PC-9 (cell line): ENCODE measurements at regions of chr14 and their contacts with region 1.

Region 1: DNA sequence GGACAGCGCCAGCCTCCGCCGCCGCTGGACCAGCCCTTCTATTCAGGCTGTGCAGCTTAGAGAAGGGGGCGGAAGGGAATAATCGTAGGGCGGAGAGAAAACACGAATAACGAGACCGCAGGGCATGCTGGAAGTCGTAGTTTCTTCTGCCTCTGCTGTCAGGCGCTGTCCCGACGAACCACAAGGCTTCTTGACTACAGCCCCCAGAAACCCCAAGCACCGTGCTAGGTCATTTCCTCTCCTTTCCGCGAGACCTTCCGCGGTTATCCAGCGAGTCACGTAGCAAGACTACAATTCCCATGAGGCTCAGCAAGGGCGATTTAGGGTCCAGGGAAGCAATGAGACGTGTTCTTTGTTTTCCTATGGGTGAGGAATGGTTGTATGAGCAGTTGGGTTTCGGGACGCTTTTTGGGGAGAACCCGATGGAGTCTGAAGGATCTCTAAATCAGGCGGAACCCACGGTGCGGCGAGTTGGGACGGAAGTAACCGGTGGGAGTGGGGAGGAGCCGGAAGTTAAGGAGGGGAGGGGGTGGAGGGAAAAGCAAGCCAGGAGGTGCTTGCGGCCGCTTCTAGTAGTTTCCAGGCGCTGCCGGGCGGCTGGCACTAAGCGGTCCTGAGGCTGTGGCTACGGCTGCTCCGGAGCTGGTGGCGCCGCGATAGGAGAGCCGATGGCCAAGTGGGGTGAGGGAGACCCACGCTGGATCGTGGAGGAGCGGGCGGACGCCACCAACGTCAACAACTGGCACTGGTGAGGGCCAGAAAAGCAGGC is at the starts of genes AHSA1 and VIPAS39:
- DNase-seq: peak; percentile 99 to 100
- H3K4me3 ChIP-seq: peak within 1 kb of the TSS; percentile 73
- H3K27ac ChIP-seq: peak within 1 kb of the TSS; percentile 80
- H3K4me1 ChIP-seq: peaks cover 20% of the 10 kb centered on the region
- H3K27me3 ChIP-seq: no peaks in the 10 kb centered on the region
- CTCF ChIP-seq: no peak
- total RNA-seq, gene AHSA1: 448 and 674 TPM in 2 replicates
- total RNA-seq, gene VIPAS39: 46.1 and 54.5 TPM in 2 replicates

Region 2: DNA sequence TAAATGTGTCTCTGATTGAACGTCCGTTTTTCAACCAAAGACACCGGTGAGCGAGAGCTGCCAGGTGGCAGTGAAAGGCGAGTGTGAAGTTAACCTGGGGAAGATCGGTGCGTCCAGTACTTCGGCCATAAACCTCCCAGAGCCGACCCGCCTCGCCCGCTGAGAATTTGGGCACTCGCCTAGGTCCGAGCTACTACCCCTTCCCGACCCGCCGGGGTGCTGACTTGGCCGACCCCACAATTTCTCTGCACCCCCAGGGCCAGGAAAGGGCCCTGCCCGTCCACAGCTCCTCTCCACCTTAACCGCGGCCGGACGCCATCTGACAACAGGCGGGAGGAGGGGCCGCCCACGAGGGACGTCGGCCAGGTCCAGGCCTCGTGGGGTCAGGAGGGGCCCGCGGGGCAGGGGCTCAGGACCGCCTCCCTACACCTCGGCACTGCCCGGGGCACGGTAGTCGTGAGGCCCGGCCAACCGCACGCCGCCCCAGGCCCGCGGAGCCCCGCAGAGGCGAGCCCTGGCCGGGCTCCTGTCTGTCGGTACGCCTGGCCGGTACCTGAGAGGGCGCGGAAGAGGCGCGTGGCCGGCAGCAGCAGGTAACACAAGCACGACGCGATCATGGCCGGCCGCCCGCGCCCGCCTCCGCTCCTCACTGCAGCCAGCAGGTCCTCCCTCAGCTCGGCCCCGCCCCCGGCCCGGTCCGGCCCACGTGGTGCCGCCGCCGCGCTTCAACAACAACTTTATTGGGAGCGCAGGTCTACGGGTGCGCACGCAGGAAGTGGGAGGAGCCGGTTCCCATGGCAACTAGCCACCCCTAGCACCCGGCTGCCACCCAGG is 645.3 kb before region 1 on chr14 and contains the start of gene ANGEL1:
- CTCF ChIA-PET with region 1: interaction called, 3 read pairs
- POLR2A ChIA-PET with region 1: no interaction called
- intact Hi-C with region 1: loop called (anchors 1 kb)
- DNase-seq: peak; percentile 85 to 100
- H3K4me3 ChIP-seq: peak within 1 kb of the TSS; percentile 74
- H3K27ac ChIP-seq: no peak within 1 kb of the TSS
- H3K4me1 ChIP-seq: peaks cover 14% of the 10 kb centered on the region
- H3K27me3 ChIP-seq: peaks cover 17% of the 10 kb centered on the region
- CTCF ChIP-seq: no peak
- total RNA-seq, gene ANGEL1: 31.7 and 44.0 TPM in 2 replicates

Region 3: GRCh38 chr14:77301103-77301502 is 156.6 kb before region 1 on chr14:
- CTCF ChIA-PET with region 1: no interaction called
- POLR2A ChIA-PET with region 1: interaction called, 3 read pairs
- intact Hi-C with region 1: loop called (anchors 1 kb)
- DNase-seq: peak in 1 of 2 experiments; percentile 49
- H3K4me3 ChIP-seq: no peak overlapping the region
- H3K27ac ChIP-seq: no peak overlapping the region
- H3K4me1 ChIP-seq: peaks cover 32% of the 10 kb centered on the region
- H3K27me3 ChIP-seq: no peaks in the 10 kb centered on the region
- CTCF ChIP-seq: peak; percentile 86

Region 4: DNA sequence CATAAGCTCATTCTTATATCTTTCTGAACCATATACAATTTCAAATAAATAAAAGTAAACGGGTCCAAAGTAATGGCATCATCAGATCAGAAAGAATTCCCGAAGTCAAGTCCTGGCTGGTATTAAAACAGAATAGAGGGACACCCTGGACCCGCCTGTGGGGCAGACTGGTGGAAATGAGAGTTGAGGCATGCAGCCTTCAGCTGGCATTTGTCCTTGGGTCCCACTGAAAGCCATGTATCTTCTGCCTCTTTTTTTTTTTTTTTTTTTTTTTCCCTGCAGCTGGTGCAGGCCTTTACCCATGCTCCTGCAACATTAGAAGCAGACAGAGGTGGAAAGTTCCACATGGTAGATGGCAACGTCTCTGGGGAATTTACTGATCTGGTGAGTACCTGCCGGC is 10.1 kb after region 1 on chr14:
- CTCF ChIA-PET with region 1: no interaction called
- POLR2A ChIA-PET with region 1: interaction called, 10 read pairs
- intact Hi-C with region 1: no loop called
- DNase-seq: no peak
- H3K4me3 ChIP-seq: no peak overlapping the region
- H3K27ac ChIP-seq: no peak overlapping the region
- H3K4me1 ChIP-seq: no peaks in the 10 kb centered on the region
- H3K27me3 ChIP-seq: no peaks in the 10 kb centered on the region
- CTCF ChIP-seq: no peak

Region 5: GRCh38 chr14:77616454-77617229 is 158.9 kb after region 1 on chr14 and contains the start of gene SPTLC2:
- CTCF ChIA-PET with region 1: no interaction called
- POLR2A ChIA-PET with region 1: no interaction called
- intact Hi-C with region 1: loop called (anchors 1 kb)
- DNase-seq: peak; percentile 100
- H3K4me3 ChIP-seq: peak within 1 kb of the TSS; percentile 85
- H3K27ac ChIP-seq: peak within 1 kb of the TSS; percentile 76
- H3K4me1 ChIP-seq: peaks cover 50% of the 10 kb centered on the region
- H3K27me3 ChIP-seq: no peaks in the 10 kb centered on the region
- CTCF ChIP-seq: no peak
- total RNA-seq, gene SPTLC2: 68.4 and 81.7 TPM in 2 replicates

Region 6: GRCh38 chr14:77760381-77761246 is 302.9 kb after region 1 on chr14 and contains the start of gene SNW1:
- CTCF ChIA-PET with region 1: no interaction called
- POLR2A ChIA-PET with region 1: no interaction called
- intact Hi-C with region 1: loop called (anchors 1 kb)
- DNase-seq: peak; percentile 96
- H3K4me3 ChIP-seq: peak within 1 kb of the TSS; percentile 81
- H3K27ac ChIP-seq: peak within 1 kb of the TSS; percentile 38
- H3K4me1 ChIP-seq: peaks cover 21% of the 10 kb centered on the region
- H3K27me3 ChIP-seq: no peaks in the 10 kb centered on the region
- CTCF ChIP-seq: no peak
- total RNA-seq, gene SNW1: 154 and 233 TPM in 2 replicates

Region 7: GRCh38 chr14:77812028-77812427 is 354.3 kb after region 1 on chr14:
- CTCF ChIA-PET with region 1: no interaction called
- POLR2A ChIA-PET with region 1: no interaction called
- intact Hi-C with region 1: loop called (anchors 5 kb)
- DNase-seq: no peak
- H3K4me3 ChIP-seq: no peak overlapping the region
- H3K27ac ChIP-seq: no peak overlapping the region
- H3K4me1 ChIP-seq: no peaks in the 10 kb centered on the region
- H3K27me3 ChIP-seq: no peaks in the 10 kb centered on the region
- CTCF ChIP-seq: no peak